MCF 10A (cell line): ENCODE measurements at regions of chr11 and their contacts with region 1.

Region 1: GRCh38 chr11:105862736-105863367 is 159.2 kb downstream of the MSANTD4 start:
- DNase-seq: peak; percentile 69
- H3K4me3 Mint-ChIP-seq: no peak overlapping the region
- H3K27ac Mint-ChIP-seq: no peak overlapping the region
- H3K4me1 Mint-ChIP-seq: peaks cover 6% of the 10 kb centered on the region
- H3K27me3 Mint-ChIP-seq: no peaks in the 10 kb centered on the region
- CTCF ChIP-seq: peak; percentile 69

Region 2: DNA sequence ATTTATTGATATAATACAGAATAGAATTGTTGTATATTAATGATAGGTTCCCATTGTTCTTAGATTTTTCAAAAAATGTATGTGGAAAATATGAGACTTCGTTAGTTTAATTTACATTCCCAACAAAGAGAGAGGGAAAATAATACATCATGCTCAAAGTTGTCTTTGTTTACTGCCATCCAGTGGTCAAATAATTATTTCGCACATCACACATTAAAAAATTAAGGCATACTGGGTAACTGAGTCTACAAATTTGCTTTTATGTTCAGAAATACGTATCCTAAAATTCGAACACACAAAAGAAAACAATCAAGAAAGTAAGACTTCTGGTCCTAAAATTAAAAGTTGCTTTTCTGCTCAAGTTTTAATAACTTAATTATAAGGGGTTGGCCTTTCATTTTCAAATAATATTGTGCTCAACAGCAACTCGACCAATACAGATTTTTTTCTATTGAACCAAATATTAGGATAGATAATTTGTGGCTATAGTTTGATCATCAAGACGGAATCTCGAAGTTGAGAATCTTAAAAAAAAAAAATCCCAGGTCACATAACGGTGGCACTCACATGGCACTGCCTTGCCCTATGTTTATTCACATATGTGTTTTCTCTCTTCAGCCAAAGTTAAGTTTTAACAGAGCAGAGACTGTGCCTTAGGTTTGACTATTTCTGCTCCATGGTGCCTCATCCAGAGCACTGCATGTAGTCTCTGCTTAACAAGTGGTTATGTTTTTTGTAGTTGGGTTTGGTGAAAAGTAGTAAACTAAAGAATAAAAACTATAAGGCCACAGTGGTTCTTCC is 1711.2 kb before region 1 on chr11:
- CTCF ChIA-PET with region 1: interaction called, 6 read pairs
- POLR2A ChIA-PET with region 1: no interaction called
- intact Hi-C with region 1: loop called (anchors 5 kb)
- DNase-seq: peak; percentile 43
- H3K4me3 Mint-ChIP-seq: no peak overlapping the region
- H3K27ac Mint-ChIP-seq: no peak overlapping the region
- H3K4me1 Mint-ChIP-seq: no peaks in the 10 kb centered on the region
- H3K27me3 Mint-ChIP-seq: no peaks in the 10 kb centered on the region
- CTCF ChIP-seq: peak; percentile 51

Region 3: DNA sequence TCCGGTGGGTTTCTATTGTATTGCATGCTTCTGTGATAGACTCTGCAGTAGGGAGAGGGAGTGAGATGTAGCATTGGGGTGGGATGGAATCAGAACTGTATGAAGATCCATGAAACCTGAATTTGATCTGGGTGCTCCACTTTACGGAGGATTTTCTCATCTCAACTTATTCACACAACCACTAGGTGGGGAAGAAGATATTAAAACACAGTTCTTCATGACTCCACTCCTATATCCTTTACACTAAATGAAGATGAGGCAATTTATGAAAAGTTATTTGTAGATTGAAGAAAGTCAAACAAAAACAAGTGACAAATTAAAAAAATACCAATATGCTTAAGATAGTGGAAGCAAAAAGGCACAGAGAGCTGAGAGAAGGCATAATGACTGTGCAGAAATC is 1606.3 kb before region 1 on chr11:
- CTCF ChIA-PET with region 1: interaction called, 9 read pairs
- POLR2A ChIA-PET with region 1: no interaction called
- intact Hi-C with region 1: loop called (anchors 1 kb)
- DNase-seq: peak; percentile 17
- H3K4me3 Mint-ChIP-seq: no peak overlapping the region
- H3K27ac Mint-ChIP-seq: no peak overlapping the region
- H3K4me1 Mint-ChIP-seq: no peaks in the 10 kb centered on the region
- H3K27me3 Mint-ChIP-seq: no peaks in the 10 kb centered on the region
- CTCF ChIP-seq: no peak

Region 4: DNA sequence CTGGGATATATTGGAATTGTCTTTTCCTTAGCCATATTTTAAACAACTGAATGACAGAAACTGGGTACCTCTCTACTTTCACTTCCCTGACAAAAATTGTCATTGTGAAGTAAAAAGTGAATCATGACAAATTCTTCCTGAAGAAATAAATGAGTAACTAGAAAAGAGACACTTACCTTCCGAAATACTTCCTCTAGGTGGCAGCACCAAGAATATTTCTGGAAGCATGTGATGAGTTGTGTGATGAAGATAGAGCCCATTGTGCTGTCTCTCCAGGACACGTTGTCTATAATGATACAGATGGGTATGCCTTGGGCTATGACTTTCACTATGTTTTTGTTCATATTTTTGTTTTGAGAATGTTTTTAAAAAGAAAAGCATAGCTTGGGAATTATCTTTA is 915.9 kb before region 1 on chr11:
- CTCF ChIA-PET with region 1: interaction called, 17 read pairs
- POLR2A ChIA-PET with region 1: no interaction called
- intact Hi-C with region 1: loop called (anchors 1 kb)
- DNase-seq: peak; percentile 80
- H3K4me3 Mint-ChIP-seq: no peak overlapping the region
- H3K27ac Mint-ChIP-seq: no peak overlapping the region
- H3K4me1 Mint-ChIP-seq: peaks cover 5% of the 10 kb centered on the region
- H3K27me3 Mint-ChIP-seq: no peaks in the 10 kb centered on the region
- CTCF ChIP-seq: peak; percentile 17

Region 5: DNA sequence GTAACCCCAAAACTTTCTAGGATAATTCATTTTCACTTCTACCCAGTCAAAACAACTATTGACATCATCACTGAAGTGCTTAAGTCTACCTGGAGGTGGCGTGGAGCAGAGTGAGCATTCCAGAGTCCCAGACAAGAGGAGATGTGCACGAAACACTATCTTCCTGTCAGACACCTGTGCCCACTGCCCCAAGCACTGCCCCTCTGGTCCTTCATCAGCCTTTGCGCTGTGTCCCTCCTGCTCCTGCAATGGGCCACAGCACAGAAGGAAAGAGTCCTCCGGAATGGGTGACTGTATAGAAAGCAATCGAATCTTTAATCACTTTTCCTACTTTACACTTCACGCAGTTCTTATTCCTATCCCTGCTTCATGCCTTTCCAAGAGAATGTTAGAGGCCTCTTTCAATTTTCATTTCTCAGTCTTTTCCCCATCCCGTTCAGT is 253.5 kb before region 1 on chr11:
- CTCF ChIA-PET with region 1: interaction called, 3 read pairs
- POLR2A ChIA-PET with region 1: no interaction called
- intact Hi-C with region 1: loop called (anchors 5 kb)
- DNase-seq: peak; percentile 57
- H3K4me3 Mint-ChIP-seq: peak overlapping the region; percentile 70
- H3K27ac Mint-ChIP-seq: no peak overlapping the region
- H3K4me1 Mint-ChIP-seq: peaks cover 13% of the 10 kb centered on the region
- H3K27me3 Mint-ChIP-seq: peaks cover 15% of the 10 kb centered on the region
- CTCF ChIP-seq: peak; percentile 39